ENCODE measurements at regions of chr10 and their contacts with region 1.

Region 1: GRCh38 chr10:68208424-68209042 is 23.4 kb downstream of the ATOH7 start:
- DNase-seq: peak; percentile 20
- ATAC-seq: peak; percentile 89
- H3K4me3 ChIP-seq: no peak overlapping the region
- H3K27ac ChIP-seq: no peak overlapping the region
- H3K4me1 ChIP-seq: no peaks in the 10 kb centered on the region; the same call in 1 of the 2 replicates
- H3K27me3 ChIP-seq: no peaks in the 10 kb centered on the region
- CTCF ChIP-seq: peak; percentile 56 to 73 (median 58)
- EP300 ChIP-seq: no peak
- POLR2A ChIP-seq: no peak
- RAD21 ChIP-seq: peak; percentile 63

Region 2: GRCh38 chr10:67788025-67788886 is 420.3 kb before region 1 on chr10:
- CTCF ChIA-PET with region 1: interaction called, 50 read pairs
- POLR2A ChIA-PET with region 1: no interaction called
- RAD21 ChIA-PET with region 1: interaction called, 10 read pairs
- SMC1A ChIA-PET with region 1: interaction called, 27 read pairs
- in situ Hi-C with region 1: no loop called
- intact Hi-C with region 1: loop called (anchors 1 kb)
- DNase-seq: no peak
- ATAC-seq: peak; percentile 84
- H3K4me3 ChIP-seq: no peak overlapping the region
- H3K27ac ChIP-seq: no peak overlapping the region
- H3K4me1 ChIP-seq: peaks cover 20% of the 10 kb centered on the region
- H3K27me3 ChIP-seq: no peaks in the 10 kb centered on the region
- CTCF ChIP-seq: peak; percentile 73 to 85 (median 83)
- EP300 ChIP-seq: no peak
- POLR2A ChIP-seq: no peak
- RAD21 ChIP-seq: peak; percentile 84

Region 3: DNA sequence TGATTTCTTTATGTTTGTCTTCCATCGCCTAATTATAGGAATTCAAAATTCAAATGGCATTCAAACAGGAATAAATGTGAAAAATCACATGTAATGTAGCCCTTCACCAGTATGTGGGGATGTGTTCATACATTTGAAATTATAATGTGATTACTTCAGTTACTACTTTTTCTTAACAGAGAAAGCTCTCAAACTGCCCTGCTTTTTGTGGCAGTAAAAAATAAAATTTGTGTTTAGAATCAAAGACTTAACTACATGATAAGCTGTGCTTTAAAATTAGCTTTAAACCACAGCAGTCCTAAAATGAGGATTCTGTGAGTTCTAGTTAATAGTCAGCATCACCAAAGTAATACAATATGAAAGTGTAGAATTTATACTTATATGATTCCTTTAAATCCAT is 125.7 kb before region 1 on chr10:
- CTCF ChIA-PET with region 1: interaction called, 11 read pairs
- POLR2A ChIA-PET with region 1: no interaction called
- RAD21 ChIA-PET with region 1: no interaction called
- SMC1A ChIA-PET with region 1: no interaction called
- in situ Hi-C with region 1: no loop called
- intact Hi-C with region 1: loop called (anchors 2 kb)
- DNase-seq: no peak
- ATAC-seq: no peak
- H3K4me3 ChIP-seq: no peak overlapping the region
- H3K27ac ChIP-seq: no peak overlapping the region
- H3K4me1 ChIP-seq: no peaks in the 10 kb centered on the region
- H3K27me3 ChIP-seq: no peaks in the 10 kb centered on the region; a peak in 1 of 4 replicates
- CTCF ChIP-seq: peak in 1 of 3 experiments; percentile 6; a peak in 2 of 6 replicates
- EP300 ChIP-seq: no peak
- POLR2A ChIP-seq: no peak
- RAD21 ChIP-seq: peak; percentile 33; the same call in 1 of the 2 replicates

Region 4: DNA sequence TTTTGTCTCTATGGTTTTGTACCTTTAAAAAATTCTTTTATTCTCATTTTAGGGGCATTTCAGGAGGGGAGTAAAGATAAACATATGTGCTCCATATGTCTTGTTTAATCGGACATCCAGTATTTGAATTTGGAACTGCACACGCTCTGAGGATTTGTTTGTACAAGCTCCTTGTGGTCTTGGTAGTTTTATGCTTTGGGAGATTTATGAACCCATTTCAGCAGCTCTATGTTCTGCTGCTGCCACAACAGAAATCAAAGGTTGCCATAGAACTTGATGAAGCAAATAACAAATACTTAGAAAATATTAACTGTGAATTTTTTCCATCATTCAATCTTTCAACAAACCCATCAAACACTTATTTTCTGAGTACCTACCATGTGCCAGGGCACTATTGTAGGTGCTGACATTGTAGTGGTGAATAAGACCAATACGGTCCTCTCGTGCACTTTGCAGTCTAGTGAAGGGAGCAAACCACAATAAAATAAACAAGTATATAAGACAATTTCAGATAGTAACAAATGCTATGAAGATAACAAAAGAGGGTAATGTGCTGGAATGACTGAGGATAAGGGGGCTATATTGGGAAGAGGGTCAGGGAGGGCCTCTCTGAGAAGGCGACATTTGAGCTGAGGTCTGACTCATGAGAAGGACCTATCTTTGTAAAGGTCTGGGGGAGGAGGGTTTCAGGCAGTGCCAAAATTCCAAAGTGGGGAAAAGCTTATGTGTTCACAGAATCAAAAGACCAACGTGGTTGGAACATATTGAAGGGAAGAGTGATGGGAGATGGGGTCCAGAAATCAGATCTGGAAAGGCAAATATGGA is 68.9 kb before region 1 on chr10:
- CTCF ChIA-PET with region 1: no interaction called
- POLR2A ChIA-PET with region 1: no interaction called
- RAD21 ChIA-PET with region 1: no interaction called
- SMC1A ChIA-PET with region 1: no interaction called
- in situ Hi-C with region 1: no loop called
- intact Hi-C with region 1: no loop called
- DNase-seq: no peak
- ATAC-seq: no peak
- H3K4me3 ChIP-seq: no peak overlapping the region
- H3K27ac ChIP-seq: no peak overlapping the region
- H3K4me1 ChIP-seq: no peaks in the 10 kb centered on the region
- H3K27me3 ChIP-seq: no peaks in the 10 kb centered on the region; a peak in 1 of 4 replicates
- CTCF ChIP-seq: no peak
- EP300 ChIP-seq: no peak
- POLR2A ChIP-seq: no peak
- RAD21 ChIP-seq: no peak

Region 5: DNA sequence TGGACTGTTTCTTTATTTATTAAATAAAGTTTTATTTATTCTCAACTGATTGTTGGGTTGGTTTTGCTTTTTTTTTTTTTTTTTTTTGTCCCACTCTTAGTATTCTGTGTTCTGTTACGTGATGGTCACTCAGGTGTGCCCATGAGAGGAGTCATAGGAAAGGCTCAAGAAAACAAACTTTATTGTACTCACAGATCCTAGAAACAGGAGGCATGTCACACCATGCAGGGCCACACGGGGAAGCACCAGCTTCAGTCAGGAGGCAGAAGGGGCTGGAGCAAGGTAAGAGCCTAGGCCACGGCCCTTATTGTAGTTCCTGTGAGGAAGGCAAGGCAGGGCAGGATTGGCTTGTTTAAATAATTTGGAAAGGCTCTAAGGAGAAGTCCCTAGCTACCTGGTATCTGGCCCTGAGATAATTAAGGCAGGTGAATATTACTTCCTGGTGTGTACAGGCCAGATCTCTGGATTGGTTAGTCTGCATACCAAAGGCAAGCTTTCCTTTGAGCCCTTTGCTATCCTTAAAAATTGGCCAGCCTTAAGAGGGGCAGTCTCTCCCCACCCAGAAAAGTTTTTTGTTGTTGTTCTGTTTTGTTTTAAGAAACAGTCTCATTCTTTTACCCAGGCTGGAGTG is 15.1 kb after region 1 on chr10:
- CTCF ChIA-PET with region 1: interaction called, 18 read pairs
- POLR2A ChIA-PET with region 1: no interaction called
- RAD21 ChIA-PET with region 1: interaction called, 6 read pairs
- SMC1A ChIA-PET with region 1: interaction called, 6 read pairs
- in situ Hi-C with region 1: no loop called
- intact Hi-C with region 1: no loop called
- DNase-seq: no peak
- ATAC-seq: peak; percentile 71
- H3K4me3 ChIP-seq: no peak overlapping the region
- H3K27ac ChIP-seq: no peak overlapping the region
- H3K4me1 ChIP-seq: no peaks in the 10 kb centered on the region
- H3K27me3 ChIP-seq: no peaks in the 10 kb centered on the region
- CTCF ChIP-seq: no peak
- EP300 ChIP-seq: no peak
- POLR2A ChIP-seq: no peak
- RAD21 ChIP-seq: peak; percentile 28; the same call in 1 of the 2 replicates

Region 6: DNA sequence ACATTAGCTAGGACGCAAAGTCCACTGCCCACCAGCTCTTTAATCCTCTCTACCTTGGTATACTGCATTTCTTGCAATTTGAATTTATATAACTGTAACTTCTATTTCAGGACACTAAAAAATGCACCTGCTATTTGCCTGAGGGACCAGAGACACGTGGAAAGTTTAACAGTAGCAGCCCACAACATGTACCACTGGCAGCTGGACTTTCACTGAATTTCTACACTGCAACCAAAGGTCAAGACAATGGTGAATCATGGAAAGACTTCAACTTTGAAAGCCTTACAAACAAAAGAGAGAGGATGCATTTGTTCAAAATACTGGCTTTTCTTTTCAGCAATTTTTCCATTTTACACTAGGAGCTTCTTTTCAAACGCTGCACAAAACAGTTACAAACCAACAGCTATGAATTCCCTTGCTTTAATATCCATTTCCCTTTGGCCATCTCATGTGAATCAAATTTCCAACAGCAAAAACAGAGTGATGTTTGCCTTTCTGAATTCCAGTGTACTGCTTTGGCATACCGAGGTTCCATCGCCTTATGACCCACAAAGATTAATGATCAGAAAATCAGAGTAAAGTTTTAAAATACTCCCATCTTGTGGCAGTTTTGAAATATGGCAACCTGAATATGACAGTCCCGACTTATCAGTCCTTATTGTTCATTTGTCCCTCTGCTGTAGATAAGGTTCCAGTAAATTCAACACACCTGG is 93.4 kb after region 1 on chr10:
- CTCF ChIA-PET with region 1: interaction called, 267 read pairs
- POLR2A ChIA-PET with region 1: interaction called, 3 read pairs
- RAD21 ChIA-PET with region 1: interaction called, 160 read pairs
- SMC1A ChIA-PET with region 1: interaction called, 159 read pairs
- in situ Hi-C with region 1: no loop called
- intact Hi-C with region 1: loop called (anchors 1 kb)
- DNase-seq: peak; percentile 41
- ATAC-seq: peak; percentile 84
- H3K4me3 ChIP-seq: no peak overlapping the region
- H3K27ac ChIP-seq: no peak overlapping the region
- H3K4me1 ChIP-seq: peaks cover 16% of the 10 kb centered on the region
- H3K27me3 ChIP-seq: no peaks in the 10 kb centered on the region
- CTCF ChIP-seq: peak; percentile 52 to 64 (median 56); a peak in 5 of 6 replicates
- EP300 ChIP-seq: no peak
- POLR2A ChIP-seq: no peak
- RAD21 ChIP-seq: peak; percentile 70

Region 7: DNA sequence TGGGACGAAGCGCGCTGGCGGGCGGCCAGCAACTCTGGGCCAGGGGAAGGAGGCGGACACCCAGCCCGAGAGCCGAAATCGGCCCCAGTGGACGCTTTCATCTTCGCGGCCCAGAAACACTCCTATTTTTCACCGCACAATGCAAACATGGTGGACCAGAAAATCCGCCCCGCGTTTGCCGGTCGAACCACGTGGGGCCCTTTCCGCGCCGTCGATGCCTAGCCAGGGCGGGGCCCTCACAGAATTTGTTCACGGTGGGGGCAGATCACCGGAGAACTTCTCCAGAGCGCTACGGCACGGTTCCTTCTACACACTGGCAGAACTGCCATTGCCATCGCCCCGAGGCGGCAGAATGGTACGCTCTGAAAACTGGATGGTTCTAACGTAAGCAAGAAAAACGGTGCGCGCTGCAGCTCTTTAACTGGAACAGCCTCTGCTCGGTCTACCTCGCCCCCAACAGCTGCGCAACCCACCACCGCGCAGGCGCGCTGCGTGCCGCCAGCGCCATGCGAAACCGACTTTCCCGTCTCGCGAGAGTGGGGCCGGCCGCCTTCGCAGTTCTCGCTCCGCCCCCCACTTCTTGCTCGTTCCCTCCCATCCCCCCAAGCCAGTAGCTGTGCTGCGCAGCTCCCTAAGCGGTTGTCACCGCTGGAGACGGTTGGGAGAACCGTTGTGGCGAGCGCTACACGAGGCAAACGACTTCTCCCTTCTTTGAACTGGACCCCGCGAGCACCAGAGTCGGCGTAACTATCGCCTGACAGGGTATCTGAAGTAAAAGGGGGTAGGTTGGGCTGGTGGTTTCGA is 123.1 kb after region 1 on chr10 and contains the start of gene HNRNPH3:
- CTCF ChIA-PET with region 1: interaction called, 11 read pairs
- POLR2A ChIA-PET with region 1: no interaction called
- RAD21 ChIA-PET with region 1: interaction called, 9 read pairs
- SMC1A ChIA-PET with region 1: interaction called, 16 read pairs
- in situ Hi-C with region 1: no loop called
- intact Hi-C with region 1: no loop called
- DNase-seq: peak; percentile 93
- ATAC-seq: peak; percentile 80
- H3K4me3 ChIP-seq: peak within 1 kb of the TSS; percentile 99
- H3K27ac ChIP-seq: peak within 1 kb of the TSS; percentile 99
- H3K4me1 ChIP-seq: no peaks in the 10 kb centered on the region; the same call in 1 of the 2 replicates
- H3K27me3 ChIP-seq: no peaks in the 10 kb centered on the region
- CTCF ChIP-seq: no peak
- EP300 ChIP-seq: peak in 1 of 2 experiments; percentile 37; a peak in 1 of 4 replicates
- POLR2A ChIP-seq: peak; percentile 98
- RAD21 ChIP-seq: no peak
- polyA plus RNA-seq, gene HNRNPH3: 76.0 to 98.7 TPM

Region 8: GRCh38 chr10:68705548-68705947 is 497.0 kb after region 1 on chr10:
- CTCF ChIA-PET with region 1: no interaction called
- POLR2A ChIA-PET with region 1: no interaction called
- RAD21 ChIA-PET with region 1: no interaction called
- SMC1A ChIA-PET with region 1: no interaction called
- in situ Hi-C with region 1: no loop called
- intact Hi-C with region 1: no loop called
- DNase-seq: no peak
- ATAC-seq: no peak
- H3K4me3 ChIP-seq: no peak overlapping the region
- H3K27ac ChIP-seq: no peak overlapping the region
- H3K4me1 ChIP-seq: no peaks in the 10 kb centered on the region
- H3K27me3 ChIP-seq: no peaks in the 10 kb centered on the region
- CTCF ChIP-seq: no peak
- EP300 ChIP-seq: no peak
- POLR2A ChIP-seq: no peak
- RAD21 ChIP-seq: no peak

Region 9: DNA sequence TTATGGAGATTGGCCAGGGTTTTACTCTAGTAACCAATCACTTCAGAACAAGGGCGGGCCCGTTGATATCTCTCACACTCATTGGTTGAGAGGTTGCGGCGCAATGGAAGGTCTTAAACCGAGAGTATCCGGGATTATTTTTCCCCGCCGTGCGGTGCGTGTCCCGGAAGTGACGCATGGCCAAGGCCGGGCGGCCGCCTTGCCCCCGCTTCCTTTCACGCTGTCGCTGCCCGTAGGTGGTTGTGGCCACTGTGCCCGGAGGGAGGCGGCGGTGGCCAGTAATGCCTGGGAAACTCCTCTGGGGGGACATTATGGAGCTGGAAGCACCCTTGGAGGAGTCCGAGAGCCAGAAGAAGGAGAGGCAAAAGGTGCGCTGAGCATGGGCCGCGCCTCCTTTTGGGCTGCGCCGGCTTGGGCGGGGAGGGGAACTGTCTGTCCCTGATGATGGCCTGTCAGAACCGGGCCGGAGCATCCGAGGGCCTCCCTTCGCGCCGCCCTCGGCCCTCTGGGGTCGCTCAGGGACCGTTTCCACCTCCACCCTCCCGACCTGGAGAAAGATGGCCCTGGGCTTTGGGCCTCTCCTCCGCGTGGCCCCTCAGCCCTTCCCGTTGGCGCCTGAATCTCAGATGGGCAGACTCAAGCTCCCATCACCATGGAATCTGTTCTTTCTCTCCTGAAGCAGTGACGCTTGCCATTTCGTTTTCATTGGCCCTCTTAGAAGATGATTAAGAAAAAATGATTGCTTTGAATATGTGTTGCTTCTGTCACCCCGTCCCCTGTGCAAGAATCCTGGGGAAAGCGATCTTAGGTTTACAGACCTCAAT is 692.8 kb after region 1 on chr10 and contains the start of gene DDX50:
- CTCF ChIA-PET with region 1: interaction called, 3 read pairs
- POLR2A ChIA-PET with region 1: interaction called, 4 read pairs
- RAD21 ChIA-PET with region 1: interaction called, 3 read pairs
- SMC1A ChIA-PET with region 1: no interaction called
- in situ Hi-C with region 1: no loop called
- intact Hi-C with region 1: loop called (anchors 10 kb)
- DNase-seq: peak; percentile 97
- ATAC-seq: peak; percentile 98
- H3K4me3 ChIP-seq: peak within 1 kb of the TSS; percentile 69
- H3K27ac ChIP-seq: peak within 1 kb of the TSS; percentile 95
- H3K4me1 ChIP-seq: peaks cover 3% of the 10 kb centered on the region; the same call in 1 of the 2 replicates
- H3K27me3 ChIP-seq: no peaks in the 10 kb centered on the region
- CTCF ChIP-seq: 0 out of 6 replicates have a peak, but pooled peaks of 2 of the 3 experiments have one; percentile 2 to 6
- EP300 ChIP-seq: no peak
- POLR2A ChIP-seq: peak; percentile 91
- RAD21 ChIP-seq: no peak
- polyA plus RNA-seq, gene DDX50: 24.9 to 32.0 TPM

Measured in GM12878 (cell line).